Activated CD4-positive, alpha-beta T cell treated with anti-CD3 and anti-CD28 coated beads for 36 hours (primary cell): ENCODE measurements at regions of chr17 and their contacts with region 1.

Region 1: GRCh38 chr17:27805520-27806146 is 5.3 kb upstream of the NOS2 start:
- DNase-seq: peak; percentile 88
- ATAC-seq: peak; percentile 54
- H3K4me3 Mint-ChIP-seq: peak overlapping the region; percentile 50
- H3K27ac Mint-ChIP-seq: peak overlapping the region; percentile 94
- H3K4me1 Mint-ChIP-seq: peaks cover 41% of the 10 kb centered on the region
- H3K27me3 Mint-ChIP-seq: no peaks in the 10 kb centered on the region

Region 2: GRCh38 chr17:27649929-27650328 is 155.7 kb before region 1 on chr17:
- CTCF ChIA-PET with region 1: no interaction called
- POLR2A ChIA-PET with region 1: no interaction called
- intact Hi-C with region 1: no loop called
- DNase-seq: no peak
- ATAC-seq: no peak
- H3K4me3 Mint-ChIP-seq: no peak overlapping the region
- H3K27ac Mint-ChIP-seq: peak overlapping the region; percentile 37
- H3K4me1 Mint-ChIP-seq: peaks cover 7% of the 10 kb centered on the region
- H3K27me3 Mint-ChIP-seq: no peaks in the 10 kb centered on the region

Region 3: GRCh38 chr17:27760069-27760885 is 45.4 kb before region 1 on chr17:
- CTCF ChIA-PET with region 1: interaction called, 15 read pairs
- POLR2A ChIA-PET with region 1: no interaction called
- intact Hi-C with region 1: loop called in 1 of 2 experiments (anchors 2 kb)
- DNase-seq: peak; percentile 86
- ATAC-seq: peak; percentile 64
- H3K4me3 Mint-ChIP-seq: no peak overlapping the region
- H3K27ac Mint-ChIP-seq: no peak overlapping the region
- H3K4me1 Mint-ChIP-seq: no peaks in the 10 kb centered on the region
- H3K27me3 Mint-ChIP-seq: peaks cover 3% of the 10 kb centered on the region

Region 4: DNA sequence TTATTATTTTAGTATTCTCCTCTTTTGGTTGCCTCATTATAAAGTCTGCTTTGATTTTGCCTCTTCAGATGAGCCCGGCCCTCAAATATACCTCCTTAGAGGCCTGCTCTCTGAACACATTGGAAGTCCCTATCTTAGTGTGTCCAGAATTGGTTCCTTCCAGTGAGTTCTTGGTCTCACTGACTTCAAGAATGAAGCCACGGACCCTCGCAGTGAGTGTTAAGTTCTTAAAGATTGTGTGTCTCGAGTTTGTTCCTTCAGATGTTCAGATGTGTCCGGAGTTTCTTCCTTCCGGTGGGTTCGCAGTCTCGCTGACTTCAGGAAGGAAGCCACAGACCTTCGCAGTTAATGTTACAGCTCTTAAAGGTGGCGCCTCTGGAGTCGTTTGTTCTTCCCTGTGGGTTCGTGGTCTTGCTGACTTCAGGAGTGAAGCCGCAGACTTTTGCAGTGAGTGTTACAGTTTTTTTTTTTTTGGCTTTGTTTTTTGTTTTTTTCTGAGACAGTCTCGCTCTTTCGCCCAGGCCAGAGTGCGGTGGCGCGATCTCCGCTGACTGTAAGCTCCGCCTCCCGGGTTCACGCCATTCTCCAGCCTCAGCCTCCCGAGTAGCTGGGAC is 40.5 kb after region 1 on chr17:
- CTCF ChIA-PET with region 1: interaction called, 10 read pairs
- POLR2A ChIA-PET with region 1: no interaction called
- intact Hi-C with region 1: loop called in 1 of 2 experiments (anchors 2 kb)
- DNase-seq: peak; percentile 38
- ATAC-seq: peak; percentile 57
- H3K4me3 Mint-ChIP-seq: peak overlapping the region; percentile 30
- H3K27ac Mint-ChIP-seq: peak overlapping the region; percentile 84
- H3K4me1 Mint-ChIP-seq: peaks cover 16% of the 10 kb centered on the region
- H3K27me3 Mint-ChIP-seq: no peaks in the 10 kb centered on the region

Region 5: GRCh38 chr17:27892866-27893769 is 87.5 kb after region 1 on chr17 and contains the start of gene LYRM9:
- CTCF ChIA-PET with region 1: interaction called, 126 read pairs
- POLR2A ChIA-PET with region 1: no interaction called
- intact Hi-C with region 1: loop called (anchors 1 kb)
- DNase-seq: peak; percentile 96
- ATAC-seq: peak; percentile 96
- H3K4me3 Mint-ChIP-seq: peak within 1 kb of the TSS; percentile 76
- H3K27ac Mint-ChIP-seq: peak within 1 kb of the TSS; percentile 63
- H3K4me1 Mint-ChIP-seq: peaks cover 21% of the 10 kb centered on the region
- H3K27me3 Mint-ChIP-seq: peaks cover 17% of the 10 kb centered on the region
- total RNA-seq, gene LYRM9: 5.9 to 6.3 TPM

Region 6: GRCh38 chr17:28133562-28133970 is 327.9 kb after region 1 on chr17:
- CTCF ChIA-PET with region 1: interaction called, 3 read pairs
- POLR2A ChIA-PET with region 1: no interaction called
- intact Hi-C with region 1: loop called in 1 of 2 experiments (anchors 5 kb)
- DNase-seq: no peak
- ATAC-seq: peak; percentile 58
- H3K4me3 Mint-ChIP-seq: no peak overlapping the region
- H3K27ac Mint-ChIP-seq: no peak overlapping the region
- H3K4me1 Mint-ChIP-seq: peaks cover 10% of the 10 kb centered on the region
- H3K27me3 Mint-ChIP-seq: no peaks in the 10 kb centered on the region